Gastrocnemius medialis (tissue), 4 donors: ENCODE measurements at regions of chr17 and their contacts with region 1.

Region 1: GRCh38 chr17:51000835-51001638 is 119.6 kb downstream of the SPAG9 start:
- DNase-seq: no peak
- ATAC-seq: peak in 1 of 2 donors; percentile 64
- H3K4me3 ChIP-seq: no peak overlapping the region
- H3K27ac ChIP-seq: peak overlapping the region in 1 of 4 donors; percentile 20
- H3K4me1 ChIP-seq: no peaks in the 10 kb centered on the region
- H3K27me3 ChIP-seq: no peaks in the 10 kb centered on the region
- CTCF ChIP-seq: peak; percentile 35 to 63 (median 48)
- POLR2A ChIP-seq: no peak

Region 2: DNA sequence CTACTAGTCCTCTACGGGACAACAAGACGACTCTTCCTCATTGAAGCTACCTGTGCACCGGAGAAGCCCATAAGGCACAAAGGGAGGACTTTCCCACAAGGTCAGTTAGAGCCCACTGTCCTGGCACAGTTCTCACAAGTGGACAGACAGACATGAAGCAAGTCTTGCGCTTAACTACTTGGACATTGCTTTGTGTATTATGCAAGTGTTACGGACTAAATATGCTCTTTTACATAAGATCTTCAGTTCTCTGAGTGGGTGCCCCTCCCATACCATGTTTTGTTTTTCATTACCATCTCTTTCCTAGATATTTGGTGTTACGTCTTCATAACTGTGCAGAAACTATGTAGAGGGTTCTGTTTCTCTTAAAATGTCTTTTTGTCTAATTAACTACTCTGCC is 251.8 kb before region 1 on chr17:
- in situ Hi-C with region 1: no loop called
- intact Hi-C with region 1: no loop called
- DNase-seq: no peak
- ATAC-seq: no peak
- H3K4me3 ChIP-seq: no peak overlapping the region
- H3K27ac ChIP-seq: no peak overlapping the region
- H3K4me1 ChIP-seq: no peaks in the 10 kb centered on the region
- H3K27me3 ChIP-seq: no peaks in the 10 kb centered on the region
- CTCF ChIP-seq: no peak
- POLR2A ChIP-seq: no peak

Region 3: GRCh38 chr17:50967795-50968194 is 33.2 kb before region 1 on chr17:
- in situ Hi-C with region 1: no loop called
- intact Hi-C with region 1: no loop called
- DNase-seq: no peak
- ATAC-seq: no peak
- H3K4me3 ChIP-seq: no peak overlapping the region
- H3K27ac ChIP-seq: peak overlapping the region; percentile 1 to 48 (median 38)
- H3K4me1 ChIP-seq: peaks cover 0 to 13% of the 10 kb centered on the region in 2 donors
- H3K27me3 ChIP-seq: no peaks in the 10 kb centered on the region
- CTCF ChIP-seq: no peak
- POLR2A ChIP-seq: no peak

Region 4: DNA sequence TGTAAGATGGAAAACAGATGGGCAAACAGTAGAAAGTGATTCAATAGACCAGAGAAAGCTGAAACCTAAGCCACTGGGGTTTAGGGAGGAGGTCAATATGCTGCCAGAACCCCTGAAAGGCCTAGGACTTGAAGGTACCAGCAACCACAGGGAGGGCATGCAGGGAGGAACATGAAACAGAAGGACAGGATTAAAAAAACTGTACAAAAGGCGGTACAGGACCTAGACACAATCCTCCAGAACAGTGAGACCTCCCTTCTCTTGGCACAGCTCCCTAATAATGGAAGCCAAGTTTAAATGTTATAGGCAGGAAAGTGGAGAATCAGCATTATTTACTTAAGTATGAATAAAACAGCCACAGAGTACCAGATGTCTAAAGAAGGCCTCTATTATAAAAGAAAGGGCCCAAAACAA is 14.1 kb after region 1 on chr17:
- in situ Hi-C with region 1: no loop called
- intact Hi-C with region 1: no loop called
- DNase-seq: no peak
- ATAC-seq: no peak
- H3K4me3 ChIP-seq: no peak overlapping the region
- H3K27ac ChIP-seq: peak overlapping the region in 2 of 4 donors; percentile 1 to 28
- H3K4me1 ChIP-seq: peaks cover 7 to 8% of the 10 kb centered on the region in 2 donors
- H3K27me3 ChIP-seq: no peaks in the 10 kb centered on the region
- CTCF ChIP-seq: no peak
- POLR2A ChIP-seq: no peak

Region 5: GRCh38 chr17:51056813-51057510 is 55.9 kb after region 1 on chr17:
- in situ Hi-C with region 1: no loop called
- intact Hi-C with region 1: loop called (anchors 2 kb)
- DNase-seq: peak; percentile 14 to 60
- ATAC-seq: peak; percentile 89 to 96
- H3K4me3 ChIP-seq: no peak overlapping the region
- H3K27ac ChIP-seq: peak overlapping the region; percentile 72 to 78 (median 74)
- H3K4me1 ChIP-seq: peaks cover 34 to 35% of the 10 kb centered on the region in 2 donors
- H3K27me3 ChIP-seq: no peaks in the 10 kb centered on the region
- CTCF ChIP-seq: peak; percentile 16 to 67 (median 51)
- POLR2A ChIP-seq: no peak

Region 6: DNA sequence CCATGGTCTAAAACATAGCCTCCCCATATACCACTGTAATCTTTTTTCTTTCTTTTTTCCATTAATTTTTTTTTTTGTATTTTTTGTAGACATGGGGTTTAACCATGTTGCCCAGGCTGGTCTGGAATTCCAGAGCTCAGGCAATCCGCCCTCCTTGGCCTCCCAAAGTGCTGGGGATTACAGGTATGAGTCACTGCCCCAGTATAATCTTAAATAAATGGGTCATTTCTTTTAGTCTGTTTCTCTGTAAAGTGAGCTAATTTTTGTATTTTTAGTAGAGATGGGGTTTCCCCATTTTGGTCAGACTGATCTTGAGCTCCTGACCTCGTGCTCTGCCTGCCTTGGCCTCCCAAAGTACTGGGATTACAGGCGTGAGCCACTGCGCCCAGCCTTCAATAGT is 146.6 kb after region 1 on chr17:
- in situ Hi-C with region 1: loop called in 3 of 4 experiments (anchors 5 to 10 kb)
- intact Hi-C with region 1: no loop called
- DNase-seq: no peak
- ATAC-seq: no peak
- H3K4me3 ChIP-seq: no peak overlapping the region
- H3K27ac ChIP-seq: peak overlapping the region in 1 of 4 donors; percentile 54
- H3K4me1 ChIP-seq: peaks cover 6 to 10% of the 10 kb centered on the region in 2 donors
- H3K27me3 ChIP-seq: no peaks in the 10 kb centered on the region
- CTCF ChIP-seq: no peak
- POLR2A ChIP-seq: no peak